Activated CD8-positive, alpha-beta memory T cell treated with anti-CD3 and anti-CD28 coated beads, Interleukin-2, amount 10 ng/mL, durations not matched to agents 7 days and 5 days (primary cell): ENCODE measurements at regions of chr6 and their contacts with region 1.

Region 1: DNA sequence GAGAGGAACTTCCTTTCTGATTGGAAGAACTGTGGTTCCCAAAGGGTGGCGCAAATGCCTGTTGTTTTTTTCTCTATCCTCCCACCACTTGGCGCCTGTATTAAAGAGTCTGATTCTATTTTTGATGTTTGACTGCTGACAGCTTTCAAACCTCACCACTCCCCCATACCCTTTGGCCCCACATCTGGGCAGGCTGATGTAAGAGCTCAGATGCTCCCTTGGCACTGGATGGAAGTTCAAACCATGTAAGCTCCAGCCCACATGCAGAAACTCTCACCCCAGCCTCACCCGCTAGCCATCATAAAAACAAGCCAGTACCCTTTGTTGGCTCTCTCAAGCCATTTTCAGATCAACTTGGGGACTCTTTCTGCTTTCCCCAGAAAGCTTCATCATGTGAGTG is 20.0 kb upstream of the TMEM14A start:
- DNase-seq: no peak
- ATAC-seq: no peak
- H3K4me3 Mint-ChIP-seq: no peak overlapping the region
- H3K27ac Mint-ChIP-seq: no peak overlapping the region
- H3K4me1 Mint-ChIP-seq: peaks cover 8% of the 10 kb centered on the region
- H3K27me3 Mint-ChIP-seq: peaks cover 39% of the 10 kb centered on the region

Region 2: GRCh38 chr6:52640170-52640569 is 10.8 kb before region 1 on chr6:
- CTCF ChIA-PET with region 1: interaction called, 30 read pairs
- DNase-seq: no peak
- ATAC-seq: no peak
- H3K4me3 Mint-ChIP-seq: no peak overlapping the region
- H3K27ac Mint-ChIP-seq: no peak overlapping the region
- H3K4me1 Mint-ChIP-seq: peaks cover 15% of the 10 kb centered on the region
- H3K27me3 Mint-ChIP-seq: peaks cover 12% of the 10 kb centered on the region

Region 3: DNA sequence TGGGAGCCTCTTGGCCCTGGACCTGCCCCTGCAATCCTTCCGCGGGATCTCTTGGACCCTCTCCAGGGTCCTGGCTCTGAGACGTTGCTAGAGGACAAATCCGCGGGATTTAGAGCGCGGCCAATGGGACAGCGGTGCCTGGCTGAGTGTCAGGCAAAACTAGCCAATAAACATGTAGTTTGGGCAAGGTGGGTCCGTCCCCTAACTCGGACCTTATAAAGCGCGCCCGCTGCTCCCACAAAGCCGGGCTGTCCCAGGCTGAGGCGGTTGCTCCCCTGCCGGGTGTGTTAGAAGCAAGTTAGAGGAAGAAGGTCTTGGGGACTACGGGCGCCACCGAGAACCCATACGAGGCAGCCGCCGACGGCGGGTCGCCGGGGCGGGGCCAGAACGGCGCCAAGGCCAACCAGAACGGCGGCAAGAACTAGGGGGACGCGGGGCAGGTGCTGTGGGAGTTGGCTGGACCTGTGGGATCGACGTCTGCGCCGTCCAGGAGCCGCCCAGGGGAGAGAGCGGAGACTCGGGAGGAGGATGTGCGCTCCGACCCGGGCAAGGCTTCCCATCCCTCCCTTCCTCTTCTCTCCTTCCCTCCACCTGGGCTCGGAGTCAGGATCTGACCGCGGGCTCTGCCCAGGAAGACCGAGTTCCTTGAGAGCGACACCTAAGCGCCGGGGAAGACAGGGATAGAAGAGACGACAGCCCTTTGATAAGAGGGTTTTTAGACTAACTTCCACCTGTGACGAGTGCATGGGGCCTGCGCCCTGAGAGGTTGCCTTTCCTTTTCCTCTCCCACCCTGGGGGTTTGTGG is 13.4 kb after region 1 on chr6:
- CTCF ChIA-PET with region 1: interaction called, 52 read pairs
- DNase-seq: peak; percentile 90
- ATAC-seq: peak; percentile 98
- H3K4me3 Mint-ChIP-seq: no peak overlapping the region
- H3K27ac Mint-ChIP-seq: no peak overlapping the region
- H3K4me1 Mint-ChIP-seq: peaks cover 22% of the 10 kb centered on the region
- H3K27me3 Mint-ChIP-seq: no peaks in the 10 kb centered on the region

Region 4: GRCh38 chr6:52724406-52725121 is 73.6 kb after region 1 on chr6:
- CTCF ChIA-PET with region 1: no interaction called
- DNase-seq: peak; percentile 68
- ATAC-seq: peak; percentile 86
- H3K4me3 Mint-ChIP-seq: no peak overlapping the region
- H3K27ac Mint-ChIP-seq: no peak overlapping the region
- H3K4me1 Mint-ChIP-seq: no peaks in the 10 kb centered on the region
- H3K27me3 Mint-ChIP-seq: no peaks in the 10 kb centered on the region